Activated CD8-positive, alpha-beta T cell treated with anti-CD3 and anti-CD28 coated beads, Interleukin-2, amount 10 ng/mL, durations not matched to agents 7 days and 5 days (primary cell): ENCODE measurements at regions of chr7 and their contacts with region 1.

Region 1: GRCh38 chr7:32846701-32847100 is 44.9 kb downstream of the KBTBD2 start:
- DNase-seq: peak; percentile 93
- ATAC-seq: peak; percentile 100
- H3K4me3 Mint-ChIP-seq: peak overlapping the region; percentile 31
- H3K27ac Mint-ChIP-seq: no peak overlapping the region
- H3K4me1 Mint-ChIP-seq: peaks cover 10% of the 10 kb centered on the region
- H3K27me3 Mint-ChIP-seq: peaks cover 31% of the 10 kb centered on the region

Region 2: DNA sequence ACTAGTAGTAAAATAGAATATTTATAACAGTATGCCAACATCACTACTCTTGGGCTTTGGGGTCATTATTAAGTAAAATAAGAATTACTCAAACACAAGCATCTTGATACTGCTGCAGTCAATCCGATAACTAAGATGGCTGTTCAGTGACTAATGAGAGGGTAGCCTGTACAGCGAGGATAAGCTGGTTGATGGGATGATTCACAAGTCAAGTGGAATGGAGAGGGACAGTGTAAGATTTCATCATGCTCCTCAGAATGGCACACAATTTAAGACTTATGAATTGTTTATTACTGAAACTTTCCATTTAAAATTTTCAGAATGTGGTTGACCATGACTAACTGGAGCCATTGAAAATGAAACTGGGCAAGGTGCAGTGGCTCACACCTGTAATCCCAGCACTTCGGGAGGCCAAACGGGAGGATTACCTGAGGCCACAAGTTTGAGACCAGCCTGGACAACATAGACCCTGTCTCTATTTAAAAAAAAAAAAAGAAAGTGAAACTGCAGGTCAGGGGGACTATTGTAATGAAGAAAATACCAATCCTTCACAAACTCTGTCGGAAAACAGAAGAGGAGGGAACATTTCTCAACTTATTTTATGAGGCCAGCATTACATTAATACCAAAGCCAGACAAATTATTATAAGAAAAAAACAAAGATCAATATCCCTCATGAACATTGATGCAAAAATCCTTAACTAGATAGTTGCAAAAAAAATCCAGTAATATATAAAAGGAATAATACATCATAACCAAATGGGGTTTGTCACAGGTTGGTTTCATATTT is 340.2 kb before region 1 on chr7:
- CTCF ChIA-PET with region 1: no interaction called
- POLR2A ChIA-PET with region 1: no interaction called
- DNase-seq: peak; percentile 24
- ATAC-seq: peak; percentile 72
- H3K4me3 Mint-ChIP-seq: peak overlapping the region; percentile 42
- H3K27ac Mint-ChIP-seq: peak overlapping the region; percentile 40
- H3K4me1 Mint-ChIP-seq: peaks cover 25% of the 10 kb centered on the region
- H3K27me3 Mint-ChIP-seq: no peaks in the 10 kb centered on the region

Region 3: GRCh38 chr7:32858648-32859047 is 11.9 kb after region 1 on chr7:
- CTCF ChIA-PET with region 1: interaction called, 18 read pairs
- POLR2A ChIA-PET with region 1: no interaction called
- DNase-seq: no peak
- ATAC-seq: no peak
- H3K4me3 Mint-ChIP-seq: no peak overlapping the region
- H3K27ac Mint-ChIP-seq: no peak overlapping the region
- H3K4me1 Mint-ChIP-seq: no peaks in the 10 kb centered on the region
- H3K27me3 Mint-ChIP-seq: peaks cover 24% of the 10 kb centered on the region

Region 4: GRCh38 chr7:32879460-32879859 is 32.8 kb after region 1 on chr7:
- CTCF ChIA-PET with region 1: interaction called, 17 read pairs
- POLR2A ChIA-PET with region 1: no interaction called
- DNase-seq: no peak
- ATAC-seq: no peak
- H3K4me3 Mint-ChIP-seq: no peak overlapping the region
- H3K27ac Mint-ChIP-seq: no peak overlapping the region
- H3K4me1 Mint-ChIP-seq: peaks cover 25% of the 10 kb centered on the region
- H3K27me3 Mint-ChIP-seq: no peaks in the 10 kb centered on the region

Region 5: GRCh38 chr7:32928785-32929298 is 82.1 kb after region 1 on chr7:
- CTCF ChIA-PET with region 1: interaction called, 15 read pairs
- POLR2A ChIA-PET with region 1: no interaction called
- DNase-seq: no peak
- ATAC-seq: no peak
- H3K4me3 Mint-ChIP-seq: no peak overlapping the region
- H3K27ac Mint-ChIP-seq: no peak overlapping the region
- H3K4me1 Mint-ChIP-seq: no peaks in the 10 kb centered on the region
- H3K27me3 Mint-ChIP-seq: no peaks in the 10 kb centered on the region

Region 6: DNA sequence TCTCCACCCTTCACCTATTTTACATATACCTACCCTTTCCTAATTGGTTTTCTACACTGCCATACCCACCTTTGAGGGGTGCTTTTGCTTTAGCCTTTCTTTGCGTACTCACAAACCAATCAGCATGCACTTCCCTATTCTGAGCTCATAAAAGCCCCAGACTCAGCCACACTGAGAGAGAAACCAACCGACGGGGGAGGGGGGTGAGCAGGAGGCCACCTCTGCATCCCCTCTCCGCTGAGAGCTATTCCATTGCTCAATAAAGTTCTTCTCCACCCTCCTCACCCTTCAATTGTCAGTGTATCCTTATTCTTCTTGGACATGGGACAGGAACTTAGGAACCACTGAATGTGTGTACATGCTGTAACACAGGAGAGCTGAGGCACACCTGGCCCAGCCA is 101.5 kb after region 1 on chr7:
- CTCF ChIA-PET with region 1: interaction called, 68 read pairs
- POLR2A ChIA-PET with region 1: interaction called, 3 read pairs
- DNase-seq: no peak
- ATAC-seq: no peak
- H3K4me3 Mint-ChIP-seq: no peak overlapping the region
- H3K27ac Mint-ChIP-seq: no peak overlapping the region
- H3K4me1 Mint-ChIP-seq: peaks cover 6% of the 10 kb centered on the region
- H3K27me3 Mint-ChIP-seq: peaks cover 17% of the 10 kb centered on the region

Region 7: DNA sequence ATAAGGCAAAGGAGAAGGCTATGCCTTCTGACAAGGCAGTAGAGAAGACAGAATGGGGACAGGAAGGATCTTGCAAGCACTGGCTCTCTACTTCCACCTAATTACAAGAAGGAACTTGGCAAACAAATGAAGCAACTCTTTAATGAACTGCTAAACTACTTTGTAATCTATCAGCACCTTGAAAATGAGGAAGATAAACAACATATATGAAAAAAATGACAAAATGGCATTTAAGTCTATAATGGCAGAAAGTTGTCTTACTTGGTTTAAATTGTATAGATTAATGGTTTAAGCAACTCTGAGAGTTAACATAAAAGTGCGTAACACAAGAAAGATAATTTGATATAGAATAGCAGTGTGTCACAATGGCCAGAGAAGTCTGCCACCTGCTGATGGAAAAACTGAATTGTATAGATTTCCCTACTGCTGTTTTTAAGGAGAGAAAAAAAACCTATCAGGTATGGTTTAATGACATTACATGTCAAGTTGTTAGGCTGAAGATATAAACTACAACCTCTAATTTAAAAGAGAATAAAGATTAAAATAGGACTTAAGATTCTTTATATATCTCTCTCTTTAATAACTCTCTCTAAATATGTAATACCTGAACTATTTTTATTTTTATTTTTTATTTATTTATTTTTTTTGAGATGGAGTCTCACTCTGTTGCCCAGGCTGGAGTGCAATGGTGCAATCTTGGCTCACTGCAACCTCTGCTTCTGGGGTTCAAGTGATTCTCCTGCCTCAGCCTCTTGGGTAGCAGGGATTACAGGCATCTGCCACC is 204.0 kb after region 1 on chr7:
- CTCF ChIA-PET with region 1: interaction called, 13 read pairs
- POLR2A ChIA-PET with region 1: no interaction called
- DNase-seq: peak; percentile 54
- ATAC-seq: peak; percentile 51
- H3K4me3 Mint-ChIP-seq: no peak overlapping the region
- H3K27ac Mint-ChIP-seq: no peak overlapping the region
- H3K4me1 Mint-ChIP-seq: peaks cover 49% of the 10 kb centered on the region
- H3K27me3 Mint-ChIP-seq: no peaks in the 10 kb centered on the region